GM18951 (cell line): ENCODE measurements at regions of chr9 and their contacts with region 1.

Region 1: DNA sequence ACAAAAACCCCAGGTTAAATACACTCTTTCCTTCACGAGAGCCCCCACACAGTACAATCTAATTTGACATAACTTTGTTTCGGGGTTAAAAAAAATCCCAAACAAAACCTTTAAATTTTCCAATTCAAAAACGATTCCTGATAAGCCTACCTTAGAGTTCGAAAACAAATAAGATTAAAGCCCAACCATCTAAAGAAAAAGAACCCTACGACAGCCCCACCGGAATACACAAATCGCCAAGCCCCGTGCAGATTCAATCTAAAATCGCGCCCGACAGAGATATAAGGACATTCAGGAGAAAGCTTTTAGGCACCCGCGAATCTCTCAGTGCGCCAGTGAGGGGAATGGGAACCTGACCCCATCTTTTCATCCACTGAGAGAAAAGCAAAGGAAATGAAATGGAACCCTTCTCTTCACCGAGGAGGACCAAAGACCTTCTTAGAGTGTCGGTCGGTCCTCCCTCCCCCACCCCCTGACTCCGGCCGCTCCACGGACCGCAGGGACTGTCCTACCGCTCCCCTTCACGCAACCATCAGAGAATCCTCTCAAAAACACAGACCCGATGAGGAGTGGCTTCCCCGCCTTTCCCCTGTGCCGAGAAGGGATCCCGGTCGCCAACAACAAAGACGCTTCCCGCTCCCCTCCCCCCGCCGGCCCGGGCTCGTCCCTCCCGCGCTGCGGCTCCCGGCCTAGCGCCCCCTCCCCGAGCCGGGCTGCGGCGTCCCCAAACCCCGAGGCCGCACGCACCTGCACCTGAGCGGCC is 925 bp downstream of the ABHD17B start:
- POLR2A ChIP-seq: no peak

Region 2: DNA sequence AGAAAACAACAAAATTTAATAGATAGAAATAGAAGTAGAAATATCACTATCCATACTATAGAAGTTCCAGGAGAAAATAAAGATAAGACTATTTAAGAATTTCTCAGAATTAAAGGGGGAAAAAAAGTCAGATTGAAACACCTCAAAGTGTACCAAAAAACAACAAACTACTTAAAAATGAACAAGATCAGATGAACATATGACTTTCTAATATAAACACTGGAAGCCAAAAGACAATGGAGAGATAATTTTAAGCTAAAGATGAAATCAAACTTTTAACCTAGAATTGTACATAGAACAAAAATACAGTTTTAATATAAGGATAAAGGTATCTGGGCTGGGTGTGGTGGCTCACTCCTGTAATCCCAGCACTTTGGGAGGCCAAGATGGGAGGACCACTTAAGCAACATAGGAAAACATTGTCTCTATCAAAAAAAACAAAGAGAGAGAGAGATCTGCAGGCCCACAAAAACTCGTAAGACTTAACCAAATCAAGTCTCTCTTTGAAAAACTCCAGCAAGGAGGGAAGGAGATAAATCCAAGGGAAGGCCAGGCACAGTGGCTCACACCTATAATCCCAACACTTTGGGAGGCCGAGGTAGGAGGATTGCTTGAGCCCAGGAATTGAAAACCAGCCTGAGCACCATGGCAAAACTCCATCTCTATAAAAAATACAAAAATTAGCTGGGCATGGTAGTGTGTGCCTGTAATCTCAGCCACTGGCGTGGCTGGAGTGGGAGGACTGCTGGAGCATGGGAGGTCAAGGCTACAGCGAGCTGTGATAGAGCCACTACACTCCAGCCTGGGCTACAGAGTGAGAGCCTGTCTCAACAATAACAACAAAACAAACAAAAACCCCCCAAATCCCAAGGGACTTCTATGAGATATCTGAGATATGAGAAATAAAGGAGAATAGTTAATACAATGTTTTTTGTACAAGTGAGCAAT is 31.5 kb before region 1 on chr9:
- in situ Hi-C with region 1: loop called (anchors 5 kb)
- POLR2A ChIP-seq: no peak